CD8-positive, alpha-beta memory T cell (primary cell): ENCODE measurements at regions of chr5 and their contacts with region 1.

Region 1: DNA sequence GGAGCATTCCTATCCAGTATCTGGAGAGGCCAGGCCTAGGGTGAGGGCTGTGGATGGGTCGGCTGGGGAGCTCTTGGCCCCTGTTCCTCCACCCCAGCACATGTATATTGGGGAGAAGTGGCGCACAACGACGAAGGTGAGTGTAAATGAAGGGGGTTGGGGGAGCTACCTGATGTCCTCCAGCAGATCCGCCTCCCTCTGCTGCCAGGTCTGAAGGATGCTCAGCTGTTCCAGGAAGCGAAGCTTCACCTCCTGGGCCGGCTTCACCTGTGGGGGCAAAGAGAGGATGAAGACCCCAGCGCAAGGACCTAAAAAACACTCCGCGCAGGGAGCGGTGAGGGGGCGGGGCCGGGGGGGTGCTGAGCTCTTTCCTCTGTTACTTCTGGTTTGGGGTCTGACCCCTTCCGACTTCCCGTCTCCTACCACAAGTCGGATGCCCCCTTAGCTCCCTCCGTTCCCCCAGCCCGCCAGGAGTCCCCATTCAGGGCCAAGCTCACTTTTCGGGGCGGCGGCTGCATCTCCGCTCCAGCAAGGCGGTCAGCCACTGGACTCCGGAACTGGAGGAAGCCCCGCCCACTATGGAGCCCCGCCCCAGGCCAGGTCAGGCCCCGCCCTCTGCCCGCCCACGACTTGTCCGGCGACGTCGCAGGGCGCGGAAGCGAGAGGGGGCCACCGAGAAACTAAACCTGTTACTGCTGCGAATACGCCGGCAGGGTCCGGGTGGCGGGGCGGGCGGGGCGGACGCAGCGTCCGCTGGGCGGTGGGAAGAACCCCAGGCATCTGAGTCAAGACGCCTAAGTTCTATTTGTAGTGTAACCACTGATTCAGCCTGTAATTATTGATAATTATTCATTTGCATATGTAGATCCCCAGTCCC is at the start of gene FCHSD1:
- DNase-seq: peak; percentile 81 to 90 (median 82)
- H3K4me3 ChIP-seq: peak within 1 kb of the TSS; percentile 78
- H3K4me3 Mint-ChIP-seq: peak within 1 kb of the TSS; percentile 82 to 99 (median 95)
- H3K27ac ChIP-seq: peak within 1 kb of the TSS; percentile 73
- H3K27ac Mint-ChIP-seq: peak within 1 kb of the TSS; percentile 85 to 99 (median 96)
- H3K4me1 ChIP-seq: peaks cover 26% of the 10 kb centered on the region
- H3K4me1 Mint-ChIP-seq: peaks cover 40 to 59% (median 49%) of the 10 kb centered on the region in 3 donors
- H3K27me3 ChIP-seq: no peaks in the 10 kb centered on the region
- H3K27me3 Mint-ChIP-seq: peaks cover 0 to 4% of the 10 kb centered on the region in 2 donors
- total RNA-seq, gene FCHSD1: 31.1 to 33.7 TPM

Region 2: DNA sequence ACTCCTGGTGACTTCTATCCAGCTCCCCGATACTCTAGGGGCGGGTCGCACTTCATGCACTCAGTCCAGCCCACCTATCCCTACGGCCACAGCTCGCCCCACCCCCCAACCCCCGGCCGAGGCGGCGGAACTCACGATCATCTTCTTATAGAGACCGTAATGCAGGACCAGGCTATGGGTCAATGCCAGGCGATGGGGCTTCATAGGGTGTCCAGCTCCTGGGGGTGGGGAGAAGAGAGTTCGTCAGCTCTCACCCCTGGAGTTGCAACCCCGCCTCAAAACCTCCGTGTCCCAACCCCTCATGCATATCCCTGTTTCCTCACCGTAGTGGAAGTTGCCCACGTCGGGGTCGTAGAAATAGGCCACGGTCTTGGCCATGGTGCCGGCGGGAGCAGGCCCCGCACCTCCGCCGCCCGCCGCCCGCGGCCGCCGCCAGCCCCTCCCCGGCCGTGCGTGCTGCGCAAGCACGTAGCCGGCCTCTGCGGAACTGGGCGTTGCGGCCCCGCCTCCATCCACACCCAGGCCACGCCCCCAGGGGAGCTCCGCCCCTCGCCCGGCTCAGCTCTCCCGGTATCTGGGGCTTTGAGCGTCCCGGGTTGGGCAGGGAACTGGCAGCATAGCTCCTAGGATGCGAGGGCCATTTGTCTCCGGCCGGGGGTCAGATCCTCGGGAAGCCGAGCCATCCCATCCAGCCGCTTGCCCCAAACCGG is 14.5 kb before region 1 on chr5 and contains the starts of genes HDAC3 and RELL2:
- CTCF ChIA-PET with region 1: interaction called, 22 read pairs
- POLR2A ChIA-PET with region 1: interaction called, 46 read pairs
- DNase-seq: peak; percentile 89 to 94 (median 91)
- H3K4me3 ChIP-seq: peak within 1 kb of the TSS; percentile 97
- H3K4me3 Mint-ChIP-seq: peak within 1 kb of the TSS; percentile 92 to 96 (median 94)
- H3K27ac ChIP-seq: peak within 1 kb of the TSS; percentile 85
- H3K27ac Mint-ChIP-seq: peak within 1 kb of the TSS; percentile 90 to 98 (median 93)
- H3K4me1 ChIP-seq: peaks cover 35% of the 10 kb centered on the region
- H3K4me1 Mint-ChIP-seq: peaks cover 32 to 55% (median 50%) of the 10 kb centered on the region in 3 donors
- H3K27me3 ChIP-seq: no peaks in the 10 kb centered on the region
- H3K27me3 Mint-ChIP-seq: peaks cover 0 to 1% of the 10 kb centered on the region in 2 donors
- total RNA-seq, gene HDAC3: 74.8 to 78.6 TPM
- total RNA-seq, gene RELL2: 24.8 to 26.2 TPM

Region 3: GRCh38 chr5:141664732-141665461 is 13.8 kb after region 1 on chr5:
- CTCF ChIA-PET with region 1: interaction called, 13 read pairs
- POLR2A ChIA-PET with region 1: interaction called, 4 read pairs
- DNase-seq: peak; percentile 49 to 79 (median 62)
- H3K4me3 ChIP-seq: no peak overlapping the region
- H3K4me3 Mint-ChIP-seq: no peak overlapping the region
- H3K27ac ChIP-seq: no peak overlapping the region
- H3K27ac Mint-ChIP-seq: no peak overlapping the region
- H3K4me1 ChIP-seq: no peaks in the 10 kb centered on the region
- H3K4me1 Mint-ChIP-seq: peaks cover 4 to 5% (median 4%) of the 10 kb centered on the region in 3 donors
- H3K27me3 ChIP-seq: no peaks in the 10 kb centered on the region
- H3K27me3 Mint-ChIP-seq: peaks cover 0 to 2% of the 10 kb centered on the region in 2 donors

Region 4: GRCh38 chr5:141681695-141682641 is 30.9 kb after region 1 on chr5 and contains the start of gene ARAP3:
- CTCF ChIA-PET with region 1: interaction called, 4 read pairs
- POLR2A ChIA-PET with region 1: interaction called, 11 read pairs
- DNase-seq: peak in 4 of 5 donors; percentile 17 to 64 (median 39)
- H3K4me3 ChIP-seq: peak within 1 kb of the TSS; percentile 50
- H3K4me3 Mint-ChIP-seq: peak within 1 kb of the TSS; percentile 65 to 91 (median 84)
- H3K27ac ChIP-seq: peak within 1 kb of the TSS; percentile 38
- H3K27ac Mint-ChIP-seq: peak within 1 kb of the TSS; percentile 7 to 93 (median 78)
- H3K4me1 ChIP-seq: peaks cover 27% of the 10 kb centered on the region
- H3K4me1 Mint-ChIP-seq: peaks cover 25 to 46% (median 29%) of the 10 kb centered on the region in 3 donors
- H3K27me3 ChIP-seq: no peaks in the 10 kb centered on the region
- H3K27me3 Mint-ChIP-seq: peaks cover 0 to 4% of the 10 kb centered on the region in 2 donors
- total RNA-seq, gene ARAP3: 6.9 to 7.9 TPM

Region 5: DNA sequence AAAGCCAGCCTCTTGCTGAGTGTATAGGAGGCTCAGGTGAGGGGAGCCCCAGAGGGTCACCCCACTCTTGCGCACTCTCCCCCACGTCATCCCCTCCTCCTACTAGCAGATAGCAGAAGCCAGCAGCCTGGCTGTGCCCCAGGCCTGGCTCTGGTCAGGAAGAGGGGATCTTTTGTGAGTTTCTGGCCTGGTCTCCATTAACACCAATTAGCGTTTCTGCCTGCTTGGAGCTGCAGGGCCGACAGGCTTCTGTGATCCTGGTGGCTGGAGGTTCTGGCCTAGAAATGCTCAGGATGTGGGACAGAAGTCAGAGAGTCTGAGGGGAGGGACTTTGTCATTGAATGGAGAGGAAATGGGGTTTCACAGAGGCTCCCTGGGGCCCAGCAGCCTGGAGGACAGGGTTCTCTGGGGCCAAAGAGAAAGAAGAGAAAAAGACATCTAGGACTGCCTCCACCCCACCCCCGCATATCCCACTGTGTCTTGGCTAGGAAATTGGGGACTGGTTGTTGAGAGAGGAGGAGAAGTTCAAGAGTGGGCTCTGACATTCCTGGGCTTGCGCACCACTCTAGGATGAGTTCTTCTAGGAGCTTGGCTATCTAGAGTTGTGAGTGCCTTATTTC is 78.4 kb after region 1 on chr5:
- CTCF ChIA-PET with region 1: no interaction called
- POLR2A ChIA-PET with region 1: no interaction called
- DNase-seq: no peak
- H3K4me3 ChIP-seq: no peak overlapping the region
- H3K4me3 Mint-ChIP-seq: no peak overlapping the region
- H3K27ac ChIP-seq: no peak overlapping the region
- H3K27ac Mint-ChIP-seq: no peak overlapping the region
- H3K4me1 ChIP-seq: no peaks in the 10 kb centered on the region
- H3K4me1 Mint-ChIP-seq: no peaks in the 10 kb centered on the region
- H3K27me3 ChIP-seq: no peaks in the 10 kb centered on the region
- H3K27me3 Mint-ChIP-seq: peaks cover 11 to 24% of the 10 kb centered on the region in 2 donors

Region 6: DNA sequence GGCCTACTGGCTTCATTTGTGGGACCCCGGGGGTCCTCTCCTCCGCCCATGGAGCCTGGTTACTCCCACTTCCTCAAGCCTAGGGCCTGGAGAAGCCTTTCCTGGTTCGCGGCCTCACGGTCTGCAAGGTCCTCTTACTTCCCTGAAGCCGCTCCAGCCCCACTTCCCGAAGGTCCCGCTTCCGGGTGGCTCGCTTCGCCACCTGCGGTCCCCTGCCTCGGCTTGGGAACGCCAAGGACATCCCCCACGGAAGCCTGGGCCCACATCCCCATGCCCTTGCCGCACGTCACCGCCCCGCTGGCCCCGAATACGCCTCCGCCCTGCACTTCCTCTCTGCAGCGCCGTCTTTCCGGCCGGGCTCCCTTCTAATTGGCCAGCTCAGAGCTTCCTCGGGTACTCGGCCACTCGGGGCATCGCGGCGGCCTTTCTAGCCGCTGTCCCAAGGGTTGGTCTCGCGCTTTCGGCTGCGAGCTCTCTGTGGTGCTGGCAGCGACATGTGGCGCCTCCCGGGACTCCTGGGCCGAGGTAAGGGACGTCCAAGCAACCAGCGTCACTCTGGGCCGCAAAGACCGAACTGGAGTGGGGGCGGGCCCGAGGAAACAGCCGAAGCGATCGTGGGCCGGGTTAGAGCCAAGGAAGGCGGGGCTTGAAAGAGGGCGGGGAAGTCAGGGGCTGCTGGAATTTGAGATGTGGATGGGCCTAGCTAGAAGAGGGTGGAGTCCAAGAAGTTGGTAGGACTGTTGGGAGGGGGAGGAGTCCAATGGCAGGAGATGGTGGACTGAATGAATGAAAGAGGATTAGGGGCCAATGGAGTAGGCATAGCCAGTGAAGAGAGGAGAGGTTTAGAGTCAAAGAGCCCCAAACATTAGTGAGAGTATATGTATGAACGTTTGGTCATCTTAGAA is 272.6 kb after region 1 on chr5 and contains the start of gene DELE1:
- CTCF ChIA-PET with region 1: interaction called, 3 read pairs
- POLR2A ChIA-PET with region 1: interaction called, 11 read pairs
- DNase-seq: peak; percentile 83 to 93 (median 88)
- H3K4me3 ChIP-seq: peak within 1 kb of the TSS; percentile 92
- H3K4me3 Mint-ChIP-seq: peak within 1 kb of the TSS; percentile 80 to 98 (median 90)
- H3K27ac ChIP-seq: peak within 1 kb of the TSS; percentile 97
- H3K27ac Mint-ChIP-seq: peak within 1 kb of the TSS; percentile 92 to 99 (median 98)
- H3K4me1 ChIP-seq: peaks cover 15% of the 10 kb centered on the region
- H3K4me1 Mint-ChIP-seq: peaks cover 16 to 47% (median 37%) of the 10 kb centered on the region in 3 donors
- H3K27me3 ChIP-seq: no peaks in the 10 kb centered on the region
- H3K27me3 Mint-ChIP-seq: no peaks in the 10 kb centered on the region
- total RNA-seq, gene DELE1: 48.8 to 50.2 TPM

Region 7: GRCh38 chr5:141951332-141951781 is 300.3 kb after region 1 on chr5:
- CTCF ChIA-PET with region 1: no interaction called
- POLR2A ChIA-PET with region 1: no interaction called
- DNase-seq: peak in 1 of 5 donors; percentile 37
- H3K4me3 ChIP-seq: no peak overlapping the region
- H3K4me3 Mint-ChIP-seq: peak overlapping the region in 1 of 7 donors; percentile 34
- H3K27ac ChIP-seq: no peak overlapping the region
- H3K27ac Mint-ChIP-seq: no peak overlapping the region
- H3K4me1 ChIP-seq: no peaks in the 10 kb centered on the region
- H3K4me1 Mint-ChIP-seq: peaks cover 4 to 8% (median 8%) of the 10 kb centered on the region in 3 donors
- H3K27me3 ChIP-seq: no peaks in the 10 kb centered on the region
- H3K27me3 Mint-ChIP-seq: no peaks in the 10 kb centered on the region

Region 8: GRCh38 chr5:142192286-142193113 is 541.4 kb after region 1 on chr5:
- CTCF ChIA-PET with region 1: no interaction called
- POLR2A ChIA-PET with region 1: no interaction called
- DNase-seq: no peak
- H3K4me3 ChIP-seq: no peak overlapping the region
- H3K4me3 Mint-ChIP-seq: no peak overlapping the region
- H3K27ac ChIP-seq: no peak overlapping the region
- H3K27ac Mint-ChIP-seq: no peak overlapping the region
- H3K4me1 ChIP-seq: no peaks in the 10 kb centered on the region
- H3K4me1 Mint-ChIP-seq: peaks cover 3 to 4% (median 3%) of the 10 kb centered on the region in 3 donors
- H3K27me3 ChIP-seq: no peaks in the 10 kb centered on the region
- H3K27me3 Mint-ChIP-seq: peaks cover 0 to 4% of the 10 kb centered on the region in 2 donors